ENCODE measurements at regions of chr19 and their contacts with region 1.

Region 1: GRCh38 chr19:12789904-12790619 is 1.2 kb upstream of the JUNB start:
- DNase-seq: peak; percentile 97 to 98
- ATAC-seq: peak; percentile 41 to 65 (median 56)
- H3K4me3 ChIP-seq: peak overlapping the region; percentile 30 to 100 (median 85)
- H3K27ac ChIP-seq: peak overlapping the region; percentile 94 to 100 (median 99)
- H3K4me1 ChIP-seq: peaks cover 33 to 68% (median 57%) of the 10 kb centered on the region in 9 donors
- H3K27me3 ChIP-seq: no peaks in the 10 kb centered on the region
- CTCF ChIP-seq: no peak

Region 2: DNA sequence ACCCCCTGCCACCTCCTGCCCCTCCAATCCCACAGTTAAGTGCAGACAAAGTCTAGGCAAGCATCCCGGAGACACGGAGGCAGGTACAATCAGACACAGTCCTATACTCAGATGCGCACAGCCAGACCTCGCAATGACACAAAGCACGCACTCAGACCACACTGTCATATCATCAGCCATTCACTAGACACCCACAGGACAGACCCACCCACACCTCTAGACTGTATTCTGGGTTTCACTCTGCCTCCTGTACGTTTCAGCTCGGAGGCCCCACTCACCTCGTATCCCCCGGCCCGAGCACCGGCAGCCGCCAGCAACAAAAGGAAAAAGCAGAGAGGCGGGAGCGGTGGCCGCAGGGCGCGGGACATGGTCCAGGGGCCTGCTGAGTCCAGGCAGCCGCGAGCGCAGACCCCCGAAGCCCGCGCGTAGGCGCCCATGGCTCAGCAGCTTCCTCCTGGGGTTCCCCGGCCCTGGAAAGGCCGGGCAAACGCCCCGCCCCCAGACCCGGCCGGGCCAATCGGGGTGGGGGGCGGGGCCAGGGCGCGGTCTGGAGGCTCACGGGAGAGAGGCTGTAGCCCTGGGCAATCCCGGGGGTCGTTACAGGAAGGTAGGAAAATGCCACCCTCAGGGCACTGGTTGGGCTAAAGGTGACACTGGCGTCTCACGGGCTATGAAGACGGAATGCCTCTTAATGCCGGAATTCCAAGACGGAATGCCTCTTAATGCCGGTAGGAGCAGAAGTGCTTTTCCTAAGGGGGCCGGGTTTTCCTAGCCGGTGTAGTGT is 123.6 kb before region 1 on chr19 and contains the starts of genes MAN2B1 and WDR83:
- intact Hi-C with region 1: loop called in 2 of 10 experiments (anchors 10 kb)
- DNase-seq: peak; percentile 76 to 78
- ATAC-seq: peak; percentile 83 to 90 (median 88)
- H3K4me3 ChIP-seq: peak within 1 kb of the TSS; percentile 65 to 99 (median 89)
- H3K27ac ChIP-seq: peak within 1 kb of the TSS in 9 of 10 donors; percentile 68 to 91 (median 80)
- H3K4me1 ChIP-seq: peaks cover 17 to 51% (median 41%) of the 10 kb centered on the region in 9 donors
- H3K27me3 ChIP-seq: no peaks in the 10 kb centered on the region
- CTCF ChIP-seq: peak in 1 of 9 donors; percentile 4
- total RNA-seq, gene MAN2B1: 14.2 to 89.9 (median 25.5) TPM
- total RNA-seq, gene WDR83: 5.5 to 10.7 (median 7.9) TPM

Region 3: GRCh38 chr19:12722566-12723380 is 67.3 kb before region 1 on chr19:
- intact Hi-C with region 1: loop called in 1 of 10 experiments (anchors 5 kb)
- DNase-seq: peak; percentile 93 to 99
- ATAC-seq: peak; percentile 87 to 97 (median 94)
- H3K4me3 ChIP-seq: peak overlapping the region; percentile 58 to 83 (median 70)
- H3K27ac ChIP-seq: peak overlapping the region; percentile 89 to 97 (median 94)
- H3K4me1 ChIP-seq: peaks cover 7 to 50% (median 34%) of the 10 kb centered on the region in 9 donors
- H3K27me3 ChIP-seq: no peaks in the 10 kb centered on the region
- CTCF ChIP-seq: no peak

Region 4: DNA sequence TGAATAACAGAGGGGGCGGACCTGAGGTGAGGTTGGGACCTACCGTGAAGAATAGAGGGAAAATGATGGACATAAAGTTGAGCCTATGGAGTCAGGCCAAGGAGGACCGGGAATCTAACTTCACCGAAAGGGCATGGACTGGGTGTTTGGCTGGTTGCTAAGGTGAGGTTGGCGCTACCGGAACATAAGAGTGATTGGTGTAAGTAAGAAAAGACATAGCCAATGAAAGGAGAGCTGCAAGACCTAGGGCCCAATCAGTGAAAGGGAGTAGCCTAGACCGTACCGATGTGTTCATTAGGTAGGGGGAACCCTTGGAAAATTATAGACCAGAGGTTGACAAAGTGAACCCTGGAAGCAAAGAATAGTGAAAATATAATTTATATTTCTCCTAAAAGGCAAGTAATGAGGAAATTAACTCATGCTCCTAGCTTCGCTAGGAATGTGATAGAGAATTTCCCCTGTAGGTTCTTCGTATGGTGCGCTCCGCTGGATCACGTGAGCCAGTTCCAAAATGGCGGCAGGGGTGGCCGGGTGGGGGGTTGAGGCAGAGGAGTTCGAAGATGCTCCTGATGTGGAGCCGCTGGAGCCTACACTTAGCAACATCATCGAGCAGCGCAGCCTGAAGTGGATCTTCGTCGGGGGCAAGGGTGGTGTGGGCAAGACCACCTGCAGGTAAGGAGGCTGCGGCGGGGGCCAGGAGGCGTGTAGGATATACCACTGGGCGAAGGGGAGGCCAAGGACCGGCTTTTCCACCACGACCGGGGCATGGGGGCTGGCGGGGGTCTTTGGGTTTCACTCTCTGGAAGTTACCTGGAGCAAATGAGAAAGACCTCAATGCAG is 52.8 kb before region 1 on chr19 and contains the start of gene GET3:
- intact Hi-C with region 1: loop called in 1 of 10 experiments (anchors 1 kb)
- DNase-seq: peak; percentile 75 to 96
- ATAC-seq: peak; percentile 87 to 95 (median 92)
- H3K4me3 ChIP-seq: peak within 1 kb of the TSS; percentile 68 to 93 (median 78)
- H3K27ac ChIP-seq: peak within 1 kb of the TSS; percentile 83 to 98 (median 92)
- H3K4me1 ChIP-seq: peaks cover 19 to 51% (median 39%) of the 10 kb centered on the region in 9 donors
- H3K27me3 ChIP-seq: no peaks in the 10 kb centered on the region
- CTCF ChIP-seq: no peak
- total RNA-seq, gene GET3: 50.6 to 79.7 (median 60.1) TPM

Region 5: DNA sequence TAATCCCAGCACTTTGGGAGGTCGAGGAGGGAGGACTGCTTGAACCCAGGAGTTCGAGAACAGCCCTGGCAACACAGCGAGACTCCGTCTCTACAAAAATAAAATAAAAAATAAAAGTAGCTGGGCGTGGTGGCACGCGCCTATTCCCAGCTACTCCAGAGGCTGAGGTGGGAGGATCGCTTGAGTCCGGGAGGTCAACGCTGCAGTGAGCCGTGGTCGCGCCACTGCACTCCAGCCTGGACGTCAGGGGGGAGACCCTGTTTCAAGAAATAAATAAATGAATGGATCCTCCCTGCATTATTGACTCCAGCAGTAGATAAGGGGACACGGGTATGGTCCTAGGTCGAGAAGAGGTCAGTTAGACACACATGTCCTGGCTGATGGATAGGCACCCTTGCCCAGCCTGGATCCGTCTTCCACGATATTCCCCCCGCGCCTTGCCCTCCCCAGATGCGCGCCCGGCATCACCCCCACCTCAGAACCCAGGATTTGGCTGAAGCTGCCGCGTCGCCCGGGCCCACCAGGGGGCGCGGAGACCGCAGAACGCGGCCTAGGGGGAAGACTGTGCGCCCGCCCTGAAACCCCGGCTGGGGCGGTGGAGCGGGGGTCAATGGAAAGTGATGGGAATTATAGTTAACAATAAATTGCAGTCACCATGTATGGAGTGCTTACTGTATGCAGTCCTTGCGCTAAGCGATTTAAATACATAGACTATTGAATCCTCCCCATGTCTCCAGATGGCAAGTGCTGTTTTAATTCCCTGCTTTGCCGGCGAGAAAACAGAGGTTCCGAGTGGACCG is 12.6 kb before region 1 on chr19:
- intact Hi-C with region 1: loop called in 4 of 10 experiments (anchors 1 to 2 kb)
- DNase-seq: peak; percentile 80 to 87
- ATAC-seq: peak; percentile 39 to 69 (median 53)
- H3K4me3 ChIP-seq: peak overlapping the region; percentile 48 to 78 (median 70)
- H3K27ac ChIP-seq: peak overlapping the region; percentile 85 to 99 (median 97)
- H3K4me1 ChIP-seq: peaks cover 21 to 69% (median 49%) of the 10 kb centered on the region in 9 donors
- H3K27me3 ChIP-seq: no peaks in the 10 kb centered on the region
- CTCF ChIP-seq: peak; percentile 94 to 99 (median 98)

Region 6: GRCh38 chr19:12867120-12868099 is 77.3 kb after region 1 on chr19:
- intact Hi-C with region 1: no loop called
- DNase-seq: peak in 1 of 2 donors; percentile 55
- ATAC-seq: peak; percentile 45 to 67 (median 52)
- H3K4me3 ChIP-seq: peak overlapping the region in 8 of 10 donors; percentile 22 to 44 (median 42)
- H3K27ac ChIP-seq: no peak overlapping the region
- H3K4me1 ChIP-seq: peaks cover 0 to 10% (median 7%) of the 10 kb centered on the region in 9 donors
- H3K27me3 ChIP-seq: peaks cover 0 to 26% (median 17%) of the 10 kb centered on the region in 7 donors
- CTCF ChIP-seq: no peak

Region 7: DNA sequence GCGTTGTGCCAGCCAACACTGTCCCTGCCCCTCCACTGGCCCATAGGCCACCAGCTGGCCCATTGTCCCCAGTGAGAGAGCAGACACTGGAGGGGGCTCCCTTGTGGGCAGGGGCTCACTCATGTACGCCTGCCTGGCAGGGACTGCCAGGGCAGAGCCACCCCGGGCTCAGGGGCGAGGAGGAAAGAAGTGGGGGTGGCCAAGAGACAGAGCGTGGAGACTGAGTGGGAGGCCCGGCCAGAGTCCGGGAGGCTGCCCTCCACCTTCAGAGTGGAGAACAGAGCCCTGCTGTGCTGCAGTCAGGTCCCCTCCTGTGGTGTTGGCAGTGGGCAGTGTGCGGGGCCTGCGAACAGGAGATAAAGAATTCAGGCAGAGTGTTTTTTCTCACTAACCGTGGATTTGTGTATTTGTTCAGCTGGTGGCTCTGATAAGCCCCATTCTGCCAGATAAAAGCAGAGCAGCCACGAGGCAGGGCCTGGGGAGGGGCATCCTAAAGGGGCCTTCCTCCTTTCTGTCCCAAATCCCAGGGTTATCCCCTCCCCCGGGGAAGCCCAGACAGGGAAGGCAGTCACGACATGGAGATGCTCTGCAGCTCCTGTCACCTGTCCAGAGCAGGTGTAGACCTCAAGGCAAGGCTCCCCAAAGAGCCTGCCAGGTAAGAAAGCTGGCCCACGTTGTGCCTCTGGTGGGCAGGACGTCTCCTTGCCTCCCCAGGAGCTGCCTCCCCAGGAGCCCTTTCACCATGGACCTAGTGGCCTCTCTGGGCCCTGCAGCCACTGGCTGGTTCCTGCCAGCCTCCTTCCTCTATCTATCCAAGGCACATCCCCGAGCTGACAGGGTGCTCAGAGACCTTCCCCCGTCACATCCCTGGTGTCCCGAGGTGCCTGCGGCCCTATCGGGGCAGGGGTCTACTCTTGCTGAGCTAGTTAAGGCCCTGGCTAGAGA is 279.6 kb after region 1 on chr19:
- intact Hi-C with region 1: no loop called
- DNase-seq: no peak
- ATAC-seq: peak in 1 of 8 donors; percentile 8
- H3K4me3 ChIP-seq: peak overlapping the region in 3 of 10 donors; percentile 16 to 31 (median 20)
- H3K27ac ChIP-seq: peak overlapping the region; percentile 66 to 99 (median 81)
- H3K4me1 ChIP-seq: peaks cover 54 to 94% (median 74%) of the 10 kb centered on the region in 9 donors
- H3K27me3 ChIP-seq: no peaks in the 10 kb centered on the region
- CTCF ChIP-seq: no peak